Activated CD4-positive, alpha-beta memory T cell treated with anti-CD3 and anti-CD28 coated beads, Interleukin-2, amount 10 ng/mL, durations not matched to agents 7 days and 5 days (primary cell): ENCODE measurements at regions of chr5 and their contacts with region 1.

Region 1: DNA sequence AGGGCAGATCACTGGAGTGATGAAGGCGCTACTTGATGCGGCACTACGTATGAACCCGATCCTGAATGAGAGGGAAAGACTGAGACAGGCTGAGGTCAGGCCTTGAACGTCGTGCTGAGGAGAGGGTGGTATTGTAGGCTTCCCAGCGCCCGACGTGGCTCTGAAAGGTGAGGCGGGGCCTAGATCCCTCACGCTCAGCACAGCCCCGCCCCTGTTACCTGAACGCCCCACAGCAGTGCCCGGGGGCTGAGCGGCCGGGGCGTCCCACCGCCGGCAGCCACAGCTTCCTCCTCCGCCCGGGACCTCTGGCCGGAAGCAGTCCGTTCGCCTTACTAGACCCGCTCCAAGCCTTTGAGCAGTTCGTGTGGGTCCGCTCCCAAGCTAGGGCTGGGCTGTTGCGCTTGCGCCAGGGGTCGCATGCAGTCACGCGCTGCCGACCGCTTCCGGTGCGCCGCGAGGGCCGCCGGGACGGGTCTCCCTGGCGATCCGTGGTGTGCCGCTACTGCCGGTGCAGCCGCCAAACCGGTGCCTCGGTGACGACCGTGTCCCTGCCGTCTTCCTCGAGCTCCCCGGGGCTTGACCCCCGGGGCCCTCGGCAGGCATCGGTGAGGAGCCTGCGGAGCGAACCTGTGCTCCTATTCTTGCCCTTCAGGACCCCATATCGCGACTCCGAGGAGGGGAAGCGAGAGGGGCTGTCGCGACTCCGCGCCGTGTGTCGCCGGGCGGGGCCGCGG is at the starts of genes HMGXB3 and TIGD6:
- DNase-seq: peak; percentile 89
- H3K4me3 Mint-ChIP-seq: peak within 1 kb of the TSS; percentile 88
- H3K27ac Mint-ChIP-seq: peak within 1 kb of the TSS; percentile 96
- H3K4me1 Mint-ChIP-seq: peaks cover 39% of the 10 kb centered on the region
- H3K27me3 Mint-ChIP-seq: no peaks in the 10 kb centered on the region
- total RNA-seq, gene HMGXB3: 41.6 to 44.1 TPM
- total RNA-seq, gene TIGD6: 2.0 to 2.3 TPM

Region 2: GRCh38 chr5:149731639-149732323 is 268.6 kb before region 1 on chr5:
- CTCF ChIA-PET with region 1: no interaction called
- POLR2A ChIA-PET with region 1: interaction called, 12 read pairs
- DNase-seq: peak; percentile 78
- H3K4me3 Mint-ChIP-seq: peak overlapping the region; percentile 82
- H3K27ac Mint-ChIP-seq: no peak overlapping the region
- H3K4me1 Mint-ChIP-seq: peaks cover 4% of the 10 kb centered on the region
- H3K27me3 Mint-ChIP-seq: peaks cover 10% of the 10 kb centered on the region

Region 3: GRCh38 chr5:149834246-149834855 is 166.1 kb before region 1 on chr5:
- CTCF ChIA-PET with region 1: interaction called, 12 read pairs
- POLR2A ChIA-PET with region 1: interaction called, 3 read pairs
- DNase-seq: peak; percentile 64
- H3K4me3 Mint-ChIP-seq: no peak overlapping the region
- H3K27ac Mint-ChIP-seq: no peak overlapping the region
- H3K4me1 Mint-ChIP-seq: peaks cover 7% of the 10 kb centered on the region
- H3K27me3 Mint-ChIP-seq: no peaks in the 10 kb centered on the region

Region 4: GRCh38 chr5:149938791-149939358 is 61.5 kb before region 1 on chr5:
- CTCF ChIA-PET with region 1: no interaction called
- POLR2A ChIA-PET with region 1: no interaction called
- DNase-seq: no peak
- H3K4me3 Mint-ChIP-seq: no peak overlapping the region
- H3K27ac Mint-ChIP-seq: no peak overlapping the region
- H3K4me1 Mint-ChIP-seq: peaks cover 14% of the 10 kb centered on the region
- H3K27me3 Mint-ChIP-seq: peaks cover 17% of the 10 kb centered on the region

Region 5: GRCh38 chr5:149960272-149961185 is 39.9 kb before region 1 on chr5 and contains the start of gene SLC26A2:
- CTCF ChIA-PET with region 1: interaction called, 12 read pairs
- POLR2A ChIA-PET with region 1: interaction called, 31 read pairs
- DNase-seq: peak; percentile 97
- H3K4me3 Mint-ChIP-seq: peak within 1 kb of the TSS; percentile 74
- H3K27ac Mint-ChIP-seq: peak within 1 kb of the TSS; percentile 86
- H3K4me1 Mint-ChIP-seq: peaks cover 36% of the 10 kb centered on the region
- H3K27me3 Mint-ChIP-seq: no peaks in the 10 kb centered on the region
- total RNA-seq, gene SLC26A2: 8.3 to 8.4 TPM

Region 6: GRCh38 chr5:149979896-149980295 is 20.5 kb before region 1 on chr5:
- CTCF ChIA-PET with region 1: no interaction called
- POLR2A ChIA-PET with region 1: no interaction called
- DNase-seq: no peak
- H3K4me3 Mint-ChIP-seq: no peak overlapping the region
- H3K27ac Mint-ChIP-seq: no peak overlapping the region
- H3K4me1 Mint-ChIP-seq: no peaks in the 10 kb centered on the region
- H3K27me3 Mint-ChIP-seq: no peaks in the 10 kb centered on the region